ENCODE measurements at regions of chr5 and their contacts with region 1.

Region 1: GRCh38 chr5:76641514-76642120 is 18.4 kb upstream of the F2RL2 start:
- DNase-seq: peak; percentile 78
- H3K4me3 Mint-ChIP-seq: no peak overlapping the region
- H3K27ac Mint-ChIP-seq: no peak overlapping the region
- H3K4me1 Mint-ChIP-seq: peaks cover 22% of the 10 kb centered on the region
- H3K27me3 Mint-ChIP-seq: no peaks in the 10 kb centered on the region

Region 2: GRCh38 chr5:76351577-76351976 is 290.0 kb before region 1 on chr5:
- CTCF ChIA-PET with region 1: no interaction called
- DNase-seq: no peak
- H3K4me3 Mint-ChIP-seq: no peak overlapping the region
- H3K27ac Mint-ChIP-seq: no peak overlapping the region
- H3K4me1 Mint-ChIP-seq: peaks cover 3% of the 10 kb centered on the region
- H3K27me3 Mint-ChIP-seq: peaks cover 14% of the 10 kb centered on the region

Region 3: DNA sequence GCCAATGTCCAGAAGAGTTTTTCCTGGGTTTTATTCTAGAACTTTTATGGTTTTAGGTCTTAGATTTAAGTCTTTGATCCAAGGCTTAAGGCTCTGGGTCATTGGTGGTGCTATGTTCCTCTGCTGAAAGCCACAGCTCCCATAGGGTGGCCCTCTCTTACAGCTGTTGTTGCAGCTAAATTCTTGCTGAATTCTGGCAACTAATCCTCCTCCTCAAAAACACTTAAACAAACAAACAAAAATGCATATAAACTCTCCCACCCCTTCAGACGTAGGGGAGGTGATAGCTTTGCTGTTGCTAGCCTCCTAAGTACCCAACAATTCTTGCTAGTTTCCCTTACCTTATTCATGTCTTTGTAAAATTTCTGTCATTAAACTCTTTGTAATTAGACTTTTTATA is 208.4 kb before region 1 on chr5:
- CTCF ChIA-PET with region 1: no interaction called
- DNase-seq: no peak
- H3K4me3 Mint-ChIP-seq: no peak overlapping the region
- H3K27ac Mint-ChIP-seq: no peak overlapping the region
- H3K4me1 Mint-ChIP-seq: no peaks in the 10 kb centered on the region
- H3K27me3 Mint-ChIP-seq: no peaks in the 10 kb centered on the region

Region 4: GRCh38 chr5:76601470-76601869 is 40.1 kb before region 1 on chr5:
- CTCF ChIA-PET with region 1: interaction called, 19 read pairs
- DNase-seq: peak; percentile 24
- H3K4me3 Mint-ChIP-seq: no peak overlapping the region
- H3K27ac Mint-ChIP-seq: no peak overlapping the region
- H3K4me1 Mint-ChIP-seq: no peaks in the 10 kb centered on the region
- H3K27me3 Mint-ChIP-seq: no peaks in the 10 kb centered on the region